AG04450 (cell line): ENCODE measurements at regions of chr16 and their contacts with region 1.

Region 1: GRCh38 chr16:78002915-78003538 is 19.3 kb upstream of the CLEC3A start:
- DNase-seq: peak; percentile 79
- H3K4me3 ChIP-seq: no peak overlapping the region
- H3K27ac ChIP-seq: no peak overlapping the region
- H3K27me3 ChIP-seq: no peaks in the 10 kb centered on the region
- CTCF ChIP-seq: peak; percentile 93

Region 2: GRCh38 chr16:77584205-77584859 is 418.7 kb before region 1 on chr16:
- CTCF ChIA-PET with region 1: interaction called, 26 read pairs
- POLR2A ChIA-PET with region 1: no interaction called
- DNase-seq: peak; percentile 21
- H3K4me3 ChIP-seq: no peak overlapping the region
- H3K27ac ChIP-seq: no peak overlapping the region
- H3K27me3 ChIP-seq: peaks cover 2% of the 10 kb centered on the region
- CTCF ChIP-seq: peak; percentile 82

Region 3: GRCh38 chr16:77660311-77660710 is 342.7 kb before region 1 on chr16:
- CTCF ChIA-PET with region 1: interaction called, 30 read pairs
- POLR2A ChIA-PET with region 1: no interaction called
- DNase-seq: peak; percentile 11
- H3K4me3 ChIP-seq: no peak overlapping the region
- H3K27ac ChIP-seq: no peak overlapping the region
- H3K27me3 ChIP-seq: no peaks in the 10 kb centered on the region
- CTCF ChIP-seq: peak; percentile 78

Region 4: DNA sequence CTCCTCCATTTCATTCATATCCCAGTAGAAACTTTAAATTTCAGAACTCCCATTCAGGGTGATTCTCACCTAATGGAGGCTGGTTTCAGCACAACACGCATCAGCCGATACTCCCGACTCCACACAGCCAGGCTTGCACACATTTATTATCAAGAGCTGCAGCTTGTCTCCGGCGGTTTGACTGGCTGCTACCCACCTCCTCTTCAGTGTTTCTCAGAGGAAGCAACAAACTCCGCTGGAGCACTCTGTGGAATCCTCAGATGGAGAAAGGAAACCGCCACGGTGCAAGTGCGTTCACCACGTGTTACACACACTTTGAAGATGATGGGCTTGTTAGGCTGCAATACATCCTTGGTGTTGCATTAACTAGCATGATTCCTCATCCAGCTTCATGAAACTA is 320.4 kb before region 1 on chr16:
- CTCF ChIA-PET with region 1: interaction called, 21 read pairs
- POLR2A ChIA-PET with region 1: no interaction called
- DNase-seq: no peak
- H3K4me3 ChIP-seq: no peak overlapping the region
- H3K27ac ChIP-seq: no peak overlapping the region
- H3K27me3 ChIP-seq: peaks cover 12% of the 10 kb centered on the region
- CTCF ChIP-seq: no peak

Region 5: GRCh38 chr16:77971306-77972271 is 31.4 kb before region 1 on chr16:
- CTCF ChIA-PET with region 1: interaction called, 47 read pairs
- POLR2A ChIA-PET with region 1: no interaction called
- DNase-seq: peak; percentile 59
- H3K4me3 ChIP-seq: no peak overlapping the region
- H3K27ac ChIP-seq: peak overlapping the region; percentile 21
- H3K27me3 ChIP-seq: no peaks in the 10 kb centered on the region
- CTCF ChIP-seq: peak; percentile 86

Region 6: DNA sequence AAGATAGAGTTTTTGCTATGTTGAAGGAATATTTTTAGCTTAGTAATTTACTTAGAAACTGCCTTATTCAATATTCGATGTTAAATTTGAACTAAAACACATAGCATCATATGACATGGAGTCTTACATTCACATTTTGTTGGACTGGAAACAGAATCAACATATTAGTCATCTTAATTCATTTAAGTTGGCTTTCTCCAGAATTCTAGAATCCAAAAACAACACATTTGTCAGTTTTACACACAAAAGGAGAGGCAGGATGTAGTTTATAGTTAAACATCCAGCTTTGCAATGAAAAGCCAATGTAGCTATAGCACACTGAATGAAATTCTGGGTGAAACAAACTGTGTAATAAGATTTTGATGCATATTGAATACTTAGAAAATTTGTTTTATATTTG is 139.8 kb after region 1 on chr16:
- CTCF ChIA-PET with region 1: no interaction called
- POLR2A ChIA-PET with region 1: no interaction called
- DNase-seq: no peak
- H3K4me3 ChIP-seq: no peak overlapping the region
- H3K27ac ChIP-seq: no peak overlapping the region
- H3K27me3 ChIP-seq: no peaks in the 10 kb centered on the region
- CTCF ChIP-seq: no peak